Ascending aorta (tissue), 2 donors: ENCODE measurements at regions of chr10 and their contacts with region 1.

Region 1: GRCh38 chr10:16891375-16892313 is 74.4 kb upstream of the RSU1 start:
- DNase-seq: peak in 1 of 2 donors; percentile 68
- H3K4me3 ChIP-seq: peak overlapping the region in 1 of 2 donors; percentile 9
- H3K27ac ChIP-seq: no peak overlapping the region
- H3K4me1 ChIP-seq: peaks cover 0 to 16% of the 10 kb centered on the region in 2 donors
- H3K27me3 ChIP-seq: no peaks in the 10 kb centered on the region
- CTCF ChIP-seq: peak; percentile 31 to 72 (median 70)

Region 2: GRCh38 chr10:16853201-16853600 is 38.4 kb before region 1 on chr10:
- intact Hi-C with region 1: loop called (anchors 5 kb)
- DNase-seq: no peak
- H3K4me3 ChIP-seq: no peak overlapping the region
- H3K27ac ChIP-seq: peak overlapping the region; percentile 24 to 55
- H3K4me1 ChIP-seq: peaks cover 0 to 12% of the 10 kb centered on the region in 2 donors
- H3K27me3 ChIP-seq: no peaks in the 10 kb centered on the region
- CTCF ChIP-seq: peak in 1 of 3 experiments; percentile 9

Region 3: DNA sequence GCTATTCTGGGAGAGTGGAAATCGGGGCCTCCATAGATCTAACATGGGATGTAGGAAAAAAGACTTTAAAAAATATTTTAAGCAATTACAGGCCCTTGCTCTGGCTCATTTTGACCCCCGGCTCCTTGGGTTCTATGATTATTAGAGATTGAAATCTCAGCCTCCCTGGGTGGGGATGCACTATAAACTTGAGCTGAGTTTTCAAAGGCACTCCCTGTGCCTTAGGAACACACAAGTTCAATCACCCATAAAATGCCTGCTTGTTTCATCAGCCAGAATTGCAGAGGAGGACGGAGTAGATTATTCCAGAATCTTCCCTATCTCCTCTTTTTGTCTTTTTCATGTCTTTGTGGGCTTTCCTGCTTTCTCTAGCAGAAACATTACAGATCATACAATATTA is 92.6 kb after region 1 on chr10:
- intact Hi-C with region 1: no loop called
- DNase-seq: no peak
- H3K4me3 ChIP-seq: no peak overlapping the region
- H3K27ac ChIP-seq: no peak overlapping the region
- H3K4me1 ChIP-seq: peaks cover 5 to 19% of the 10 kb centered on the region in 2 donors
- H3K27me3 ChIP-seq: no peaks in the 10 kb centered on the region
- CTCF ChIP-seq: no peak

Region 4: DNA sequence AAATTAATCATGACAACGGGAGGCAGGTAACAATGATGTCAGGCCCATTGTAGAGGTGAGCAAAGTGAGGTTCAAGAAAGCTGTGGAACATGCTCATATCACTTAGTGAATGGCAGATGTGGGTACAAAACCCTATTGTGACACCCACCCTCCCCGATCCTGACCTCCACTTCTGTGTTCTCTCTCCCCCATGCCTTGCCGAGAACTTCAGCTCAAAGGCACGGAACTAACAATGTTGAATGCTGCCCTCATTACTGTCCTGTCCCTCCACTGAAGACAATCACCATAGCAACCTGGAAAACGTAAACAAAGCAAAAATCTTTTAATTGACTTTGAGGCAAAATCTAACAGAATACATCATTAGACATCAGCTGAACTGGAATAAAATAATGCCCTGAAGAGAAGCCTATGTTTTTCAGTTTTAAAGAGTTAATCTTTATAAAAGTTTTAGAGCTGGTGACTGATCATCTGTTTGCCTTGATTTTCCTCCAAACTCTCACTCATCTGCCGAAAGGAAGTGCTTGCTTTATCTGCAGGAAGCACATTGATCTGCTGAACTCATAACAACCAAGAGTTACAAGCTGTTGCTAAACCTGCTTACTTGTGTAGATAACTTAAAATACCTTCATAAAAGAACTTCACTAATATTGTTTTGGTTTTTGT is 104.4 kb after region 1 on chr10:
- intact Hi-C with region 1: loop called (anchors 5 kb)
- DNase-seq: no peak
- H3K4me3 ChIP-seq: no peak overlapping the region
- H3K27ac ChIP-seq: peak overlapping the region; percentile 83
- H3K4me1 ChIP-seq: peaks cover 4 to 31% of the 10 kb centered on the region in 2 donors
- H3K27me3 ChIP-seq: no peaks in the 10 kb centered on the region
- CTCF ChIP-seq: no peak